Stomach (tissue), 19 donors: ENCODE measurements at regions of chr5 and their contacts with region 1.

Region 1: GRCh38 chr5:66757188-66757833 is 161.1 kb downstream of the MAST4 start:
- DNase-seq: peak; percentile 63 to 85
- H3K4me3 ChIP-seq: no peak overlapping the region
- H3K27ac ChIP-seq: no peak overlapping the region
- H3K4me1 ChIP-seq: peaks cover 0 to 8% (median 0%) of the 10 kb centered on the region in 4 donors
- H3K27me3 ChIP-seq: no peaks in the 10 kb centered on the region
- CTCF ChIP-seq: peak in 4 of 7 experiments; percentile 14 to 57 (median 38)
- EP300 ChIP-seq: no peak
- POLR2A ChIP-seq: no peak

Region 2: DNA sequence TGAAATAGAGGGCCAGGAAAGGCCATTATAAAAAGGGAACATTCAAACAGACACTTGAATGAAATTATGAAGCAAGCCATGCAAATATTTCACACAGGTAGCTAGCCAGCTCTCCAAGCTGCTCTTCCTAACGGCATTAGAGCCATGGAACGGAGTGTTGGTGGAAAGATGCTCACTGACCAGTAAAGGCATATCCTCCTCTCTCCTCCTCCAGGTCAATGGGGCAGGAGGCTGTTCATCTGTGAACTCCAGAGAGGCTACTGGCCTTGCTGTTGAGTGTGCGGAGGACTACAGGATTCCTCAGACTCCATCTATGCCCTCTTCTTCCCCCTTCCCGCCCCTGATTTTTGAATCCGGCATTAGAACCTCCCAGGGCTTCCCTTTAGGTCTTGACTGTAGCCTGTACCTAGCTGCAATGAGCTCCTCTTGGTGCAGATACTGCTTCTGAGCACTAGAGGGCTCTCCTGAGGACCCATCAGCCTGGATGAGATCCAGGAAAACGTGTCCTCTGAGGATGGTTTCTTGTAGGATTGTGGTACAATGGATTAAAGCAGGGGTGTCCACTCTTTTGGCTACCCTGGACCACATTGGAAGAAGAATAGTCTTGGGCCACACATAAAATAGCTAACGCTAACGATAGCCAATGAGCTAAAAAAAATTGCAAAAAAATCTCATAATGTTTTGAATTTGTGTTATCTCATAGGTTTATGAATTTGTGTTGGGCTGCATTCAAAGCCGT is 451.0 kb before region 1 on chr5:
- intact Hi-C with region 1: loop called (anchors 5 kb)
- DNase-seq: peak; percentile 48 to 84
- H3K4me3 ChIP-seq: no peak overlapping the region
- H3K27ac ChIP-seq: no peak overlapping the region
- H3K4me1 ChIP-seq: no peaks in the 10 kb centered on the region
- H3K27me3 ChIP-seq: peaks cover 0 to 23% (median 0%) of the 10 kb centered on the region in 3 donors
- CTCF ChIP-seq: peak in 5 of 7 experiments; percentile 35 to 75 (median 63)
- EP300 ChIP-seq: no peak
- POLR2A ChIP-seq: no peak

Region 3: DNA sequence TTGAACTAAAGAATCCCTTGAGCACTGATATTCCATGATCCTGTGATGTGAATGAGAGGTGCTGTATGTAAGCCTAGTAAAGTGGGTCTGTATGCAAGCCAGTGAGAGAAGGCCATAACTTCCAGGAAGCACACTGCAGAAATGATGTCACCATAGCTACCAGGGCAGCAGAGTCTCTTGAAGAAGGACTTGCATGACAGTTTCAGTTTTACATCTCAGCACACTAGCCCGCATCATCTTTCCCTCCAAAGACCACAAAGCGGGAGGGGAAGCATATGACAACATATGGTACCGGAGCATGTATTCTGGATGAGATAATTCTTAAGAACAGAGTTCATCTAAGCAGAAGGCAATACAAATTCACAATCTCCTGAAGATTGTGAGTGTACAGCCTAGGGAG is 198.8 kb before region 1 on chr5:
- intact Hi-C with region 1: no loop called
- DNase-seq: peak in 1 of 2 donors; percentile 35
- H3K4me3 ChIP-seq: no peak overlapping the region
- H3K27ac ChIP-seq: no peak overlapping the region
- H3K4me1 ChIP-seq: peaks cover 0 to 11% (median under 1%) of the 10 kb centered on the region in 4 donors
- H3K27me3 ChIP-seq: no peaks in the 10 kb centered on the region
- CTCF ChIP-seq: no peak
- EP300 ChIP-seq: no peak
- POLR2A ChIP-seq: no peak

Region 4: GRCh38 chr5:66617226-66617861 is 140.0 kb before region 1 on chr5:
- intact Hi-C with region 1: no loop called
- DNase-seq: no peak
- H3K4me3 ChIP-seq: no peak overlapping the region
- H3K27ac ChIP-seq: no peak overlapping the region
- H3K4me1 ChIP-seq: peaks cover 0 to 12% (median 0%) of the 10 kb centered on the region in 4 donors
- H3K27me3 ChIP-seq: no peaks in the 10 kb centered on the region
- CTCF ChIP-seq: no peak
- EP300 ChIP-seq: no peak
- POLR2A ChIP-seq: no peak

Region 5: GRCh38 chr5:66713998-66714397 is 43.3 kb before region 1 on chr5:
- intact Hi-C with region 1: no loop called
- DNase-seq: peak in 1 of 2 donors; percentile 70
- H3K4me3 ChIP-seq: no peak overlapping the region
- H3K27ac ChIP-seq: no peak overlapping the region
- H3K4me1 ChIP-seq: no peaks in the 10 kb centered on the region
- H3K27me3 ChIP-seq: no peaks in the 10 kb centered on the region
- CTCF ChIP-seq: no peak
- EP300 ChIP-seq: no peak
- POLR2A ChIP-seq: no peak